ENCODE measurements at regions of chr18 and their contacts with region 1.

Region 1: GRCh38 chr18:78884502-78884901 is 95.1 kb upstream of the SALL3 start:
- DNase-seq: no peak
- ATAC-seq: no peak
- H3K4me3 ChIP-seq: no peak overlapping the region
- H3K27ac ChIP-seq: no peak overlapping the region
- H3K4me1 ChIP-seq: no peaks in the 10 kb centered on the region
- H3K27me3 ChIP-seq: no peaks in the 10 kb centered on the region
- CTCF ChIP-seq: no peak
- EP300 ChIP-seq: no peak
- POLR2A ChIP-seq: no peak
- RAD21 ChIP-seq: no peak

Region 2: GRCh38 chr18:78813936-78814710 is 70.4 kb before region 1 on chr18:
- CTCF ChIA-PET with region 1: no interaction called
- POLR2A ChIA-PET with region 1: no interaction called
- RAD21 ChIA-PET with region 1: no interaction called
- SMC1A ChIA-PET with region 1: no interaction called
- in situ Hi-C with region 1: no loop called
- intact Hi-C with region 1: no loop called
- DNase-seq: no peak
- ATAC-seq: no peak
- H3K4me3 ChIP-seq: no peak overlapping the region
- H3K27ac ChIP-seq: no peak overlapping the region
- H3K4me1 ChIP-seq: no peaks in the 10 kb centered on the region
- H3K27me3 ChIP-seq: no peaks in the 10 kb centered on the region
- CTCF ChIP-seq: no peak
- EP300 ChIP-seq: no peak
- POLR2A ChIP-seq: no peak
- RAD21 ChIP-seq: no peak

Region 3: GRCh38 chr18:78896111-78896905 is 11.8 kb after region 1 on chr18:
- CTCF ChIA-PET with region 1: no interaction called
- POLR2A ChIA-PET with region 1: no interaction called
- RAD21 ChIA-PET with region 1: no interaction called
- SMC1A ChIA-PET with region 1: no interaction called
- in situ Hi-C with region 1: no loop called
- intact Hi-C with region 1: no loop called
- DNase-seq: no peak
- ATAC-seq: no peak
- H3K4me3 ChIP-seq: no peak overlapping the region
- H3K27ac ChIP-seq: no peak overlapping the region
- H3K4me1 ChIP-seq: no peaks in the 10 kb centered on the region
- H3K27me3 ChIP-seq: no peaks in the 10 kb centered on the region
- CTCF ChIP-seq: no peak
- EP300 ChIP-seq: no peak
- POLR2A ChIP-seq: no peak
- RAD21 ChIP-seq: no peak

Region 4: GRCh38 chr18:78939734-78940494 is 55.4 kb after region 1 on chr18:
- CTCF ChIA-PET with region 1: no interaction called
- POLR2A ChIA-PET with region 1: no interaction called
- RAD21 ChIA-PET with region 1: no interaction called
- SMC1A ChIA-PET with region 1: no interaction called
- in situ Hi-C with region 1: loop called (anchors 10 kb)
- intact Hi-C with region 1: no loop called
- DNase-seq: no peak
- ATAC-seq: no peak
- H3K4me3 ChIP-seq: no peak overlapping the region
- H3K27ac ChIP-seq: no peak overlapping the region
- H3K4me1 ChIP-seq: no peaks in the 10 kb centered on the region
- H3K27me3 ChIP-seq: no peaks in the 10 kb centered on the region
- CTCF ChIP-seq: no peak
- EP300 ChIP-seq: no peak
- POLR2A ChIP-seq: no peak
- RAD21 ChIP-seq: no peak

Region 5: DNA sequence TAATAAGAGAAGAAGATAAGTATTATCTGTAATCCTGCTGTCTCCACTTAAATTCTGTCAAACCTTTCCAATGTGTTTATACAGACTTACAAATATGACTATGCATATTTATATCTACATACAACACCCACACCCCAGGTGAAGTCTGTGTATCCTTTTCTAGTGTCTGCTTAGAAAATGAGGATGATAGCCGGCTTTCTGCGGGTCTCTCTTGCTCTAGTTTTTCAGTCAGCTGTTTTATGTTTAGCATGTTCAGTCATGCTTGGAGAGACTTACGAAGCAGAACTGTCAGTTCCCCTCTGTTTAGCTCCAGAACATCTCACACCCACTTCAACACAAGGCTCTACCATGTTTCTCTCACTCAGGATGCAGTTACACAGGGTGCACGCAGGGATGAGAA is 373.9 kb after region 1 on chr18:
- CTCF ChIA-PET with region 1: no interaction called
- POLR2A ChIA-PET with region 1: no interaction called
- RAD21 ChIA-PET with region 1: no interaction called
- SMC1A ChIA-PET with region 1: no interaction called
- in situ Hi-C with region 1: loop called (anchors 10 kb)
- intact Hi-C with region 1: no loop called
- DNase-seq: no peak
- ATAC-seq: peak; percentile 66
- H3K4me3 ChIP-seq: no peak overlapping the region
- H3K27ac ChIP-seq: no peak overlapping the region
- H3K4me1 ChIP-seq: no peaks in the 10 kb centered on the region
- H3K27me3 ChIP-seq: no peaks in the 10 kb centered on the region
- CTCF ChIP-seq: no peak
- EP300 ChIP-seq: no peak
- POLR2A ChIP-seq: no peak
- RAD21 ChIP-seq: no peak

Measured in GM12878 (cell line).